Sciatic nerve (tissue), 2 donors: ENCODE measurements at regions of chr20 and their contacts with region 1.

Region 1: DNA sequence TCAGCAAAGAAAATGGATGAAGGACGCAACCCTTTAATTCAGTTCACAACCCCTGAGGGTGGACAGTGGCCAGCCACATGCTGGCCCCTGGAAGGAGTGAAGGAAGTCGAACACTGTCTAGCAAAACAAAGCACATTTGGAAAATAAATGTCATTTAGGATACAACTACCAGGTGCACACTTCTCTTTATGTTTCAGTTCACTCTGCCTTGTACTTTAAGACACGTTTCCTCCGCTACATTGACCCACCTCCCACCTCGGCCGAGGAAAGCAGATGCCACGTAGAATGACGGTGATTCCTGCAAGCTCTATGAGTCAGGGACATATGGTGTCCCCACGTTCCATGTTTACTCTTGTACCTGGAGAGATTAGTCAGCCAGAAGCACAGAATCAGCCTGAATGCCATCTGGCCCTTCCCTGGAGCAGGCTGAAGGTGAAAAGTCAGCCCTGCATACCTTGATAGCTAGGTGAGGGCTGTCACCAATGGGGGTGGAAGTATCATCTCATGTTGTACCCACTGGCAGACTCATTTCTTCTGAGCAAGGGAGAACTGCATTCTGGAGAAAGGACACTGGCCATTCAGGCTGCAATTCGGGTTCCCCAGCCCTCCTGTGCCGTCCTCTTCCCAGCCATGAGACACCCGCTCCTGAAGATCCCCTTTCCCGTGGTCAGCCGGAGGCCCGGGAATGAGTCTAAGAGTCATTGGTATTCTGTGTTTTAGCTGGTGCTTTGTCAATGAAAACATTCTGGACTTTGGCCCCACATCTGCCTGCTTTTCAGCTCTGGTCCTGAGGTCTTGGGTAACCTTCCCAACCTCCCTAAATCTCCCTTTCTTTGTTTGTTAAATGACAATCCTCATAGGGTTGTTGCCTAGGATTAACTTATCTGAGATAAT is 60.6 kb downstream of the FOXA2 start:
- DNase-seq: no peak
- ATAC-seq: peak; percentile 15

Region 2: DNA sequence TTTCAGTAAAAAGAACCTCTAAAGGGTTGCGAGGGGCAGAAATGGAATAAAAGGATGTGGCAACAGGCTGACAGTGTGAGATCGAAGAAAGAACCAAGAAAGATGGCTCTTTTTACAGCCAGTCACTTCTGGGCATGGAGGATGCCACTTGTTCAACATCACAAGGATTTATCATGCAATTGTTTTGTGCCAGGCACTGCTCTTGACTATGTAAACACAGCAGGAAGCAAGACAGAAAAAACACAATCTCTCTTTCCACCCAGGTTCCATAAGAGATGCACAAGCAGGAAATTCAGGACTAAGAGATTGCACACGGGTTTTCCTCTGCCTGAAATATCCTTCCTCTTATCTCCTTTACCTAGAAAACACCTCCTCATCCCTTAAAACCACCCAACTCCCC is 22.6 kb after region 1 on chr20:
- intact Hi-C with region 1: no loop called
- DNase-seq: no peak
- ATAC-seq: no peak

Region 3: DNA sequence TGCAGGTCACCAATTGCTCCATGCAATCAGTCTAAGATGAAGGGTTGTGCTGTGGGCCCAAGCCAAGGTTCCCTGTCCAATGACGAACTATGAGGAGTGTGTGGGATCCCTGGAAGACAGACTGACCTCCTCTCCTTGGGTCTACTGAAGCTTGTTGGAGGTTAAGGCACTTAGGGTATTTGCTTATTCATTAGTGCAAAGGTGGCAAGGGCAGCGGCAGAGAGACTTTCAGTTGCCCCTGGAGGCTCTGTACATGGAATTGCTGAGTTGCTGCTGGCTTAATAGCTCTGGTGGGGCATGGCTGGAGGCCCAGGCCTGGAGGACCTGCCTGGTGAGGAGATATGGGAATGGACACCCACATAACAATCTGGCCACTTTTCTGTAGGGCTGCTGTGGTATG is 1385.6 kb after region 1 on chr20:
- intact Hi-C with region 1: loop called (anchors 5 kb)
- DNase-seq: no peak
- ATAC-seq: no peak